Psoas muscle (tissue), 8 donors: ENCODE measurements at regions of chr9 and their contacts with region 1.

Region 1: GRCh38 chr9:6584881-6585597 is 60.5 kb downstream of the GLDC start:
- DNase-seq: no peak
- ATAC-seq: peak in 1 of 4 donors; percentile 56
- H3K4me3 ChIP-seq: no peak overlapping the region
- H3K27ac ChIP-seq: no peak overlapping the region
- H3K4me1 ChIP-seq: no peaks in the 10 kb centered on the region
- H3K27me3 ChIP-seq: no peaks in the 10 kb centered on the region
- CTCF ChIP-seq: peak; percentile 54

Region 2: DNA sequence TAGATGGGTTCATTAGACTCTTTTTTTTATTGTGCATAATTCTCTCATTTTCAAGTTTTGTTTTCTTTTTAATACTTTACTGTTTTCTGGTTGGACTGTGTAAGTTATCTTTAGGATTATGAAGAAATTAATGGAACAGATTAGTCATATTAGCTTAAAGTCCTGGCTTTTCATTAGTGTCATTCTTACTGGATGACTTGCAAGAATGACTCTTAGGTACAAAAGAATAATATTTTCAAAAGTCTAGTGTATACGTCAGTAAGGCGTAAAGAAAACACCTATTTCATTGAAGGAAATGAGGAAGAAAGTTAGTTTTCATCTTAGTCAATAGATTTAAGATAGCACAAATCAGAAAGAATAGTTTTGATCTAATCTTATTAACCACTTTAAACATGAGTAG is 151.6 kb before region 1 on chr9:
- intact Hi-C with region 1: no loop called
- DNase-seq: no peak
- ATAC-seq: no peak
- H3K4me3 ChIP-seq: no peak overlapping the region
- H3K27ac ChIP-seq: no peak overlapping the region
- H3K4me1 ChIP-seq: peaks cover 6% of the 10 kb centered on the region
- H3K27me3 ChIP-seq: no peaks in the 10 kb centered on the region
- CTCF ChIP-seq: no peak

Region 3: DNA sequence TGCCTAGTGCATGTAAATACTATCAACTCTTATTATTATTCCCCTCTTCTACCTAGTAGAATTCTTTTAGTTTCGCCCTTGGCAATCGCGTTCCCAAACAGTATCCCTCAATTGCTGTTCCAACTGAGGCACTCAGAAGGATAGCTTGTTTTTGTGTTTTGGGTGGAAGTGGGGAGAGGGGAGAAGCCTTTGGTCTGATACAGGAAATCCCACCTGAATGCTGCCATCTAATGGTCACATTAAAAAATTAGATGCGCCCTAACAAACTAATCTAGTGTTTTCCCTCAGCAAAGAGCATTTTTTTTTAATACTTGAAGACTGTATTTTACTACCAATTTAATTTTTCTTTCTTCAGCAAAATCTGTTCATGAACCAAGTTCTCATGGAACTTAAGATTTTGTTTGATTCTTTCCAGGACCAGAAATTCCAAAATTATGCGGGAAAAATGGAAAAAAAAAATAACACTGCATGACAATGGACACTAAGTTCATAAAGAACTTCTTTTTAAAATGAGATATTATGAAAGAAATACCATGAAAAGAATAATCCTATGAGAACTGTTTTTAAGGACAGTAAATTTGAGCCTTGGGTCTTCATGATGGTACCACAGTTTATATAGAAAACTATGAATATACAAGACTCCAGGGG is 82.7 kb after region 1 on chr9:
- intact Hi-C with region 1: loop called (anchors 5 kb)
- DNase-seq: no peak
- ATAC-seq: peak in 1 of 4 donors; percentile 61
- H3K4me3 ChIP-seq: no peak overlapping the region
- H3K27ac ChIP-seq: no peak overlapping the region
- H3K4me1 ChIP-seq: no peaks in the 10 kb centered on the region
- H3K27me3 ChIP-seq: no peaks in the 10 kb centered on the region
- CTCF ChIP-seq: peak; percentile 52